CD8-positive, alpha-beta T cell (primary cell): ENCODE measurements at regions of chr16 and their contacts with region 1.

Region 1: GRCh38 chr16:89785523-89786155 is 30.8 kb downstream of the FANCA start:
- DNase-seq: peak; percentile 22 to 85 (median 65)
- ATAC-seq: peak; percentile 68
- H3K4me3 ChIP-seq: no peak overlapping the region
- H3K4me3 Mint-ChIP-seq: peak overlapping the region; percentile 57
- H3K27ac ChIP-seq: peak overlapping the region in 1 of 2 experiments; percentile 15
- H3K27ac Mint-ChIP-seq: peak overlapping the region; percentile 91
- H3K4me1 ChIP-seq: peaks cover 34% of the 10 kb centered on the region
- H3K4me1 Mint-ChIP-seq: peaks cover 30% of the 10 kb centered on the region
- H3K27me3 ChIP-seq: no peaks in the 10 kb centered on the region
- H3K27me3 Mint-ChIP-seq: no peaks in the 10 kb centered on the region
- CTCF ChIP-seq: no peak

Region 2: GRCh38 chr16:89764711-89765201 is 20.9 kb before region 1 on chr16:
- CTCF ChIA-PET with region 1: interaction called, 5 read pairs
- POLR2A ChIA-PET with region 1: interaction called, 6 read pairs
- intact Hi-C with region 1: loop called in 1 of 2 experiments (anchors 2 kb)
- DNase-seq: peak in 7 of 9 experiments; percentile 20 to 75 (median 54)
- ATAC-seq: peak; percentile 54
- H3K4me3 ChIP-seq: peak overlapping the region in 1 of 2 experiments; percentile 59
- H3K4me3 Mint-ChIP-seq: peak overlapping the region; percentile 79
- H3K27ac ChIP-seq: peak overlapping the region; percentile 1 to 88
- H3K27ac Mint-ChIP-seq: peak overlapping the region; percentile 89
- H3K4me1 ChIP-seq: peaks cover 15% of the 10 kb centered on the region
- H3K4me1 Mint-ChIP-seq: peaks cover 38% of the 10 kb centered on the region
- H3K27me3 ChIP-seq: no peaks in the 10 kb centered on the region
- H3K27me3 Mint-ChIP-seq: no peaks in the 10 kb centered on the region
- CTCF ChIP-seq: no peak

Region 3: DNA sequence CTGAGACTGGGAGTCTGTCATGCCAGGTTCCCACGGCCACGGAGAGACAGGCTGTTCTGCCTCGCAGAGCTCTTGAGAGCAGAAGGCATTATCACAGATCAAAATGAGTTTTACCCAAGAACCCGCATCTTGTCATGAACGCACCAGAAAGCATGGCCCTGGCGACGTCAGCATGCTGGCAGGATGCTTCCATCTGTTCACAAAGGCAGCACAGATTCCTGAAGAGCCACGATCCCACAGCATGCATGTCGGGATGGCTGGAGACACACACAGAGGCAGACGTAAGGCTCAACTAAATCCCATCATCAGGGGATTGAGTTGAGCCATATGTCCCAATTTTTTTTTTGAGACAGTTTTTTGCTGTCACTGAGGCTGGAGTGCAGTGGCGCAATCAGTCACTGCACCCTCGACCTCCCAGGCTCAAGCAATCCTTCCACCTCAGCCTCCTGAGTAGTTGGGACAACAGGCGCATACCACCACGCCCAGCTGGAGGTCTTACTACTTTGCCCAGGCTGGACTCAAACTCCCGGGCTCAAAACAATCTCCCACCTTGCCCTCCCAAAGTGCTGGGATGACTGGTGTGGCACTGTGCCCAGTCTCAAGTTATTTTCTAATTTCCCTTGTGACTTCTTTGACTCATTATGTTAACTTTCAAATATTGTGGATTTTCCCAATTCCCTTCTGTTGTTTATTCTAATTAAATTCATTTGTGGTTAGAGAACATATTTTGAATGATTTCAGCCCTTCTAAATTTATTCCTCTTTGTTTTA is 19.7 kb after region 1 on chr16:
- CTCF ChIA-PET with region 1: no interaction called
- POLR2A ChIA-PET with region 1: no interaction called
- intact Hi-C with region 1: no loop called
- DNase-seq: no peak
- ATAC-seq: no peak
- H3K4me3 ChIP-seq: no peak overlapping the region
- H3K4me3 Mint-ChIP-seq: no peak overlapping the region
- H3K27ac ChIP-seq: no peak overlapping the region
- H3K27ac Mint-ChIP-seq: no peak overlapping the region
- H3K4me1 ChIP-seq: no peaks in the 10 kb centered on the region
- H3K4me1 Mint-ChIP-seq: no peaks in the 10 kb centered on the region
- H3K27me3 ChIP-seq: no peaks in the 10 kb centered on the region
- H3K27me3 Mint-ChIP-seq: no peaks in the 10 kb centered on the region
- CTCF ChIP-seq: no peak